HCT116 (cell line): ENCODE measurements at regions of chr2 and their contacts with region 1.

Region 1: DNA sequence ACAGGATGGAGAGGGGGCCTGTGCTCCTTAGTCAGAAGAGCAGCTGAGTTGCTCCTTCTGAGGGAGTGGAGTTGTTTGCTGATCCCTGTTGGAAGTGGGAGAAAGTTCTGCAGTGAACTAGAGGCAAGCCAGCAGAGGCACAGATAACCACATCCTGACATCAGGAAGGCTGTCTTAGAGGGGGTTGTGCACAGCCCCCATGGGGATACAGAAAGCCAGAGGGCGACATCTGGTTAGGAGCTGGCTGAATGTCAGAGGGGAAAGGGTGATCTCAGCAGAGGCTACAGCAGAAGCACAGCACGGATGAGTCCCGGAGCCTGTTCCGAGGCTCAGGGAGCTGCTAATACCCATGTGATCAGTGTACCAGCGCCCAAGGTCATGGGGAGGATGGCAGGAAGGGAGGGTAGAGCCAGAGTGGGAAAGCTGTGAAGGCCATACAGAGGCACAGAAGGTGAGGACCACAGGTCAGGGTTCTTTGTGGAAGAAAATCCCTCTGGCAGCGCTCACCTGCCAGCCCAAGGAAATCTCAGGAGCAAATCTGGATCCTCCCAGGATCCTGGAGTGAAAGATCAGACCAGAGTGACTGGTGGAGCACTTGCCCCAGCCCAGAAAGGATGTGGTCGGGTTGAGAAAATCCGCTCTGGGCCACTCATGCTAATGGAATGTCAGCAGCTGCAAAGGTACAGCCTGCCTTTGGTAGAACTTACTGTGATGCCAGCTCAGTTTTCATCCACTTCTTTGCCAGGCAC is 111.8 kb downstream of the STPG4 start:
- DNase-seq: peak; percentile 83
- ATAC-seq: peak; percentile 92
- H3K4me3 ChIP-seq: peak overlapping the region; percentile 25 to 55
- H3K27ac ChIP-seq: peak overlapping the region; percentile 96
- H3K4me1 ChIP-seq: peaks cover 35 to 68% of the 10 kb centered on the region in 2 experiments
- H3K27me3 ChIP-seq: no peaks in the 10 kb centered on the region
- CTCF ChIP-seq: no peak
- POLR2A ChIP-seq: no peak
- RAD21 ChIP-seq: no peak

Region 2: GRCh38 chr2:46893269-46893945 is 149.9 kb before region 1 on chr2:
- CTCF ChIA-PET with region 1: no interaction called
- POLR2A ChIA-PET with region 1: no interaction called
- RAD21 ChIA-PET with region 1: no interaction called
- intact Hi-C with region 1: no loop called
- DNase-seq: no peak
- ATAC-seq: no peak
- H3K4me3 ChIP-seq: no peak overlapping the region
- H3K27ac ChIP-seq: no peak overlapping the region
- H3K4me1 ChIP-seq: peaks cover 5 to 21% of the 10 kb centered on the region in 2 experiments; a peak in 3 of 4 replicates
- H3K27me3 ChIP-seq: no peaks in the 10 kb centered on the region
- CTCF ChIP-seq: no peak
- POLR2A ChIP-seq: no peak
- RAD21 ChIP-seq: no peak

Region 3: DNA sequence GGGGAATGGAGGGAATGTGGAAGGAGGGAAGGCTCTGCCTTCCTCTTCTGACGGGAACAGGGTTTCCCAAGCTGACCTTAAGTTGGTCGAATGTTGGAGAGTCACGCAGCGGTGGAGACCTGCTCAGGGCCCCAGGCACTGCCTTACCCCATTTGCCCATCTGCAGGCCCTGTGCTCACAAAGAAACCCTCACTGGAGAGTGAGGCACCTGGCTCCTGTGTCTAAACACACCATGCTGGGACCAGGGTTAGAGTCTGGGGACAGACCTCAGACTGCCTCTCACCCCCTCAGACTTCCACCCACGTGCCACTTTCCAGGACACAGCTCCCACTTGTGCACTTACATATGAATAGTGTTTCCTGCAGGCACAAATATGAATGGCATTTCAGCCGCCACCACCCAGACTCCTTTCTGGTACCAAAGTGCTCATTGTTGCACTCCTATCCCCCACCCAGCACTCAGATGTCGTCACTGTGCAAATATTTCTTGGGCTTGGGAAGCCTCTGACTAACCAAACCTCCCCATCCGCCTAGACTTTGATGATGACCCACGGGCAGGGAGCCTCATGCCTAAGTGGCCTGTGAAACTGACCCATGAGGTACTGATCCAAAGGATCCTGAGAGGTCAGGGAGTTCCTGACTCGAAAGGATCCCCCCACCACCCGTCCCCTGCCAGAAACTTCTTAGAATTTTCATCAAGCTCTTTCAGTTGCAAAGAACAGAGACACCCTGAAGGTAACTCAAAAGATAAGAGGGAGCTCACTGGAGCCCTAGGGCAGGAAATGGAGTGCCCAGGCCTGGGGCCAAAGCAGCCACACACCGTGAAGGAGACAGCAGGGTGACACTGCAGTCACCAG is 33.5 kb after region 1 on chr2:
- CTCF ChIA-PET with region 1: no interaction called
- POLR2A ChIA-PET with region 1: no interaction called
- RAD21 ChIA-PET with region 1: interaction called in 1 of 2 experiments, 3 read pairs
- intact Hi-C with region 1: loop called (anchors 1 kb)
- DNase-seq: peak; percentile 94
- ATAC-seq: peak; percentile 81
- H3K4me3 ChIP-seq: peak overlapping the region; percentile 12 to 44; a peak in 3 of 4 replicates
- H3K27ac ChIP-seq: peak overlapping the region; percentile 95
- H3K4me1 ChIP-seq: peaks cover 70 to 99% of the 10 kb centered on the region in 2 experiments
- H3K27me3 ChIP-seq: no peaks in the 10 kb centered on the region
- CTCF ChIP-seq: no peak
- POLR2A ChIP-seq: no peak
- RAD21 ChIP-seq: no peak